Activated T-helper 2 cell treated with anti-CD3 and anti-CD28 coated beads, Interferon-gamma antibody, Interleukin-2, Interleukin-4, amounts not matched to agents 10 μg/mL and 5 μg/mL and 100 μg/mL, durations not matched to agents 14 hours and 24 hours and 36 hours (primary cell): ENCODE measurements at regions of chr10 and their contacts with region 1.

Region 1: DNA sequence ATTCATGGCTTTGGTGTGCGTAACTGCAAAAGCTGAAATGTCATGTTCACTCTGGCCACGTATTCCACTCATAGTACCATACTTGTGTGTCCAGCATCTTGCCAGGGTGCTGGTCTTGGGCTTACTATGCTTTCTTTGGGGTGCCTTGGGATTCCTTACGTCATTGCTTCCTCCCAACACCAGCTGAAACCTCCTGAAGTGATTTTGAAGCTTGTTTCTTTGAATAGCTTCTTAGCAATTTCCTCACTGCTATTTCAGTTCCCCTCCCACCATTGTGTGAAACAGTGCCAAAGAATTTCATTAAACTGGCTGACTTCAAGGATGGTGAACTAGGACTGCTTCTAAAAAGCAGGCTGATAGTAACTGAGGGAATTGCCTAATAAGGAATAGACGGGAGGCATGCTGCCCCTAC is 36.9 kb downstream of the ENTPD1 start:
- DNase-seq: no peak
- H3K4me3 Mint-ChIP-seq: no peak overlapping the region
- H3K27ac Mint-ChIP-seq: peak overlapping the region; percentile 89
- H3K4me1 Mint-ChIP-seq: peaks cover 71% of the 10 kb centered on the region
- H3K27me3 Mint-ChIP-seq: no peaks in the 10 kb centered on the region

Region 2: GRCh38 chr10:95675403-95676112 is 117.3 kb before region 1 on chr10:
- intact Hi-C with region 1: no loop called
- DNase-seq: no peak
- H3K4me3 Mint-ChIP-seq: no peak overlapping the region
- H3K27ac Mint-ChIP-seq: no peak overlapping the region
- H3K4me1 Mint-ChIP-seq: no peaks in the 10 kb centered on the region
- H3K27me3 Mint-ChIP-seq: no peaks in the 10 kb centered on the region

Region 3: DNA sequence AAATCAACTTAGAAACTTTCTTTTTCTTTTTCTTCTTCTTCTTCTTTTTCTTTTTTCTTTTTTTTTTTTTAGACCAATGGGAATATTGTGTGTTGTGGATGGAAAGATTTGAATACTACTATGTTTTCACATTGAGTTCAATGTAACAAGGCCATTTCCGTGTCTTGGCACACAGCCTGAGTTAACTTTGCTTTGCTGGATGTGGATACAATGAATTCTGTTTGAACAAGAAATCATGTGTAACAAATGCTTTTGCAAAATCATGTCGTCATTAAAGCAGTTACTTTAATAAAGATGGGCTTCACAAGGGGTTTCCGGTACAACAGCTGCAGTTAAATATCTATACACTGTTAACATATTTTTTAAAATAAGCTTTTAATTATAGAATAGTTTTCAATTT is 50.4 kb before region 1 on chr10:
- intact Hi-C with region 1: no loop called
- DNase-seq: no peak
- H3K4me3 Mint-ChIP-seq: no peak overlapping the region
- H3K27ac Mint-ChIP-seq: peak overlapping the region; percentile 19
- H3K4me1 Mint-ChIP-seq: peaks cover 31% of the 10 kb centered on the region
- H3K27me3 Mint-ChIP-seq: peaks cover 3% of the 10 kb centered on the region

Region 4: GRCh38 chr10:95818668-95819067 is 25.8 kb after region 1 on chr10:
- intact Hi-C with region 1: loop called (anchors 2 kb)
- DNase-seq: no peak
- H3K4me3 Mint-ChIP-seq: no peak overlapping the region
- H3K27ac Mint-ChIP-seq: peak overlapping the region; percentile 2
- H3K4me1 Mint-ChIP-seq: peaks cover 41% of the 10 kb centered on the region
- H3K27me3 Mint-ChIP-seq: peaks cover 4% of the 10 kb centered on the region

Region 5: GRCh38 chr10:95832216-95833041 is 39.5 kb after region 1 on chr10:
- intact Hi-C with region 1: loop called (anchors 1 kb)
- DNase-seq: peak; percentile 71
- H3K4me3 Mint-ChIP-seq: peak overlapping the region; percentile 87
- H3K27ac Mint-ChIP-seq: peak overlapping the region; percentile 98
- H3K4me1 Mint-ChIP-seq: peaks cover 64% of the 10 kb centered on the region
- H3K27me3 Mint-ChIP-seq: no peaks in the 10 kb centered on the region

Region 6: GRCh38 chr10:95841661-95842498 is 49.0 kb after region 1 on chr10:
- intact Hi-C with region 1: loop called (anchors 1 kb)
- DNase-seq: no peak
- H3K4me3 Mint-ChIP-seq: no peak overlapping the region
- H3K27ac Mint-ChIP-seq: peak overlapping the region; percentile 89
- H3K4me1 Mint-ChIP-seq: peaks cover 56% of the 10 kb centered on the region
- H3K27me3 Mint-ChIP-seq: peaks cover 2% of the 10 kb centered on the region

Region 7: DNA sequence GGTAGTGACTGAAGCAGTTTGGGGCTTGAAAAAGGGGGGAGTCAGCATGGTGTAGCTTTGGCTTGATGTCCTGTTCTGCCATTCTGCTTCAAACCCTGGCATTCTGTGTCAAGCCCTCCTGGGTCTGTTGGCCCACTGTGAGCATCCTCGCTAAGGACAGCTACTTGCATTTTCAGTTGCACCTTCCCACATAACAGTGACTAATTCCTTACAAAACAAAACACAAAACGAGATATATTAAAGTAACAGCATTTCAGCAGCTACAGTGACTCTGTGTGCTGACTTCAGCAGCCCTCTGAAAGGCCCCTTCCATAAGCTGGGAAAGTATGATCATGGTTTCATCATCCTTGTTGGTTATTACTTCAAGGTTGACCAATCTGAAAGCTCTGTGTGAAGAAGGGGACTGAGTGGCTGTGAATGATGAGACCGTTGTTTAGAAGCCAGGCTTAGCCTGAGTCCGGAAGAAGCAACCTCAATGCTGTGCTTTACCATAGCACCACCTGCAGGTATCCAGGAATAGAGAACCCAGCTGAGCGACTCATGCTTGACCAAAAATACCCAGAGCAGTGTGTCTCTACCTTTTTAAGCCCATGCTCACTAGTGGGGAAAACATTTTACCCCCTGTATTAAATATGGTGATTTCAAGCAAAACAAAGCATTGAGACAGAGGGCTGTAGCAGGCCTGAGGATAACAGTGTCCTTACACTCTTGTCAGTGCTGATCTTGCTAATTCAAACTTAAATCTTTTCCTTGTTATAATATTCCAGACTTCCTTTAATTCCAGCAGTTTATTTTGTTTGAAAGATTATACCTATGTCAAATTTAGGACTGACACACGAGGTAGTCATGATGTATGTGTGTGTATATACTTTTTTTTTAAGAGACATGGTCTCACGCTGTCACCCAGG is 72.3 kb after region 1 on chr10:
- intact Hi-C with region 1: loop called (anchors 1 kb)
- DNase-seq: peak; percentile 59
- H3K4me3 Mint-ChIP-seq: peak overlapping the region; percentile 5
- H3K27ac Mint-ChIP-seq: peak overlapping the region; percentile 82
- H3K4me1 Mint-ChIP-seq: peaks cover 56% of the 10 kb centered on the region
- H3K27me3 Mint-ChIP-seq: no peaks in the 10 kb centered on the region

Region 8: DNA sequence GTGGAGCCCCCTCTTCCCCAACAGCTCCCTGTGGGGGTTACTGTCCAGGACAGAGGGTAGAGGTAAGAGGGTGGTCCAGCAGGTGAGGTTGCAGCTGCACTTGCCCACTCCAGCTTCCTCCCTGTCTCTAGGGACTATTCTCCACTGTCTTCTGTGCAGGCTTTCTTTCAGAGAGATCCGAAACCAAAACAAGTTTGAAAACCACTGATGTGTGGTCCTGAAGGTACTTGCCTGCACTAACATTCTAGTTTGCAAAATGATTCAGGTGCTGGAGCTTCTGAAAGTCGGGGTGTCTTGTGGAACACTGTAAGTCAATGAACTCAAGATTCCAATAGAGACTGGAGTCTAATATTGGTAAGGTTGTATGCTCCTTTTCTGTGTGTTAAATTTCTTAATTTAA is 415.4 kb after region 1 on chr10:
- intact Hi-C with region 1: no loop called
- DNase-seq: no peak
- H3K4me3 Mint-ChIP-seq: no peak overlapping the region
- H3K27ac Mint-ChIP-seq: no peak overlapping the region
- H3K4me1 Mint-ChIP-seq: no peaks in the 10 kb centered on the region
- H3K27me3 Mint-ChIP-seq: peaks cover 7% of the 10 kb centered on the region